Esophagus muscularis mucosa (tissue), 4 donors: ENCODE measurements at regions of chr11 and their contacts with region 1.

Region 1: DNA sequence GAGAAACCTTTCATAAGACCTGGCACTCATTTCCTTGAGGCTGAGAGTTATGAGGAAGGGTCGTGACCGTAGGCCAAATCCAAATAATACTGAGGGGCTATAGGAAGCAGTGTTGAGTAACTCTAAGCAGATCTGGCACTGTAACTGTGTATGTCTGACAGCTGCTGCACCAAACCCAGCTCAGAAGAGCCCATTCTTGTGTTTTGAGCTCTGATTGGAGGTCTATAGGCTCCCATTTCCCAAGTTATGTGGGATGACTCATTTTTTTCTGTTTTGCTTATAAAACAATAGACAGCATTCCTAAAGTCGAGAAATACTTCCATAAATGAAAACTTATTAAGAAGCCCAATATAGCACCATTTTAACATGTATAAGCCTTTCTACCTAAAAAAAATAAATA is 645.8 kb downstream of the DLG2 start:
- DNase-seq: no peak
- H3K4me3 ChIP-seq: no peak overlapping the region
- H3K27ac ChIP-seq: no peak overlapping the region
- H3K4me1 ChIP-seq: no peaks in the 10 kb centered on the region
- H3K27me3 ChIP-seq: no peaks in the 10 kb centered on the region
- CTCF ChIP-seq: no peak
- EP300 ChIP-seq: no peak
- POLR2A ChIP-seq: no peak

Region 2: DNA sequence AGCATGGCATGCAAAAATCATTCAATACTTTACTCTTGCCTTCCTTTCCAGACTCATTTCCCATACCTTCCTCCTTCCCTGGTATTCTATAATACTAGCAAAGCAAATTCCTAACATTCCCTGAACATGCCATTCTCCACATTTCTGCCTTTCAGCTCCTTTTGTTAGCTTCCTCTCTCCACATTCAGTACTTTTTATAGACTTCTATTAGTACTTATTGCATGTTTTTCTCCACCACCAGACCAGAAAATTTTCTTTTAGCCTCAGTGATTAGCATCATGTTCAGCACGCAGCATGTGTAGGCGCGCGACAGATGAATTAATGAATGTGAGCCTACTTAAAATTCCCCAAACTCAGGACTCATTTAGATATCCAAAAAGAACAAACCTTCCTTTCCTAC is 289.5 kb before region 1 on chr11:
- intact Hi-C with region 1: no loop called
- DNase-seq: no peak
- H3K4me3 ChIP-seq: no peak overlapping the region
- H3K27ac ChIP-seq: no peak overlapping the region
- H3K4me1 ChIP-seq: peaks cover 0 to 6% (median 0%) of the 10 kb centered on the region in 4 donors
- H3K27me3 ChIP-seq: no peaks in the 10 kb centered on the region
- CTCF ChIP-seq: no peak
- EP300 ChIP-seq: no peak
- POLR2A ChIP-seq: no peak

Region 3: GRCh38 chr11:84930863-84931262 is 50.4 kb before region 1 on chr11:
- intact Hi-C with region 1: loop called (anchors 10 kb)
- DNase-seq: no peak
- H3K4me3 ChIP-seq: no peak overlapping the region
- H3K27ac ChIP-seq: no peak overlapping the region
- H3K4me1 ChIP-seq: no peaks in the 10 kb centered on the region
- H3K27me3 ChIP-seq: no peaks in the 10 kb centered on the region
- CTCF ChIP-seq: no peak
- EP300 ChIP-seq: no peak
- POLR2A ChIP-seq: no peak